ENCODE measurements at regions of chr14 and their contacts with region 1.

Region 1: DNA sequence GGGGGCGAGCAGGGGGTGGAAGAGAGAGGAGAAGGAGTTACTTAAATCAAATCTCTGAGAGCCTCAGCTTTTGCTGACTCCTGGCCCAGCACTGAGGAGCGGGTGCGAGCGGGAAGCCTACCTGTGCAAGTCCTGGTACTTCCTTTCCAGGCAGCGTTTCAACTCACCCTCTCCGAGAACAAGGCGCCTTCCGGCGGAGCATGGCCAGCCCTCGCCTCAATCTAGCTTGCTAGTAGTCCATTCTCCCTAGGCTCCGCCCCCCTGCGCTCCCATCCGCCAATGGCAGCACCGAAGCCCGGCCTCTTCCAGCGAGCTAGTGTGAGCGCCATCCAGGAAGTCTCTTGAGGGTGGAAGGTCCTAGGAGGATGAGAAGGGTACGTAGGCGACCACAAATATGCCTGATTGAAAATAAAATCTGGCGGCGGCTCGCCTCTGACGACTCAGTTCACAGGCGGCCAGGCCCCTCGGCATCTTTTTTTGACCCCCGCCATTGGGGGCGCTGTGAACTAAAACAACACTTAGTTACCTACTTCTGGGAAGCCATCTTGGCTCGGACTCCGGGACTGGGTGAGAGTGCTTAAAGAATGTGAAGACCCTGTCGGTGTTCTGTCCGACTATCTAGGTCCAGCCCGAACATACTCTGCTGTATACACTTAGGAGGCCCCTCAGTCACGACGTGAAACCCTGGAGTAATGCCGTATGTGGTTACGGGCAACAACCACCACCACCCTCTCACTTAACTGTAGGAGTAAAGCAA is at the start of gene CHD8:
- DNase-seq: peak; percentile 96 to 100
- ATAC-seq: peak; percentile 95 to 100 (median 96)
- H3K4me3 ChIP-seq: peak within 1 kb of the TSS; percentile 86
- H3K4me3 Mint-ChIP-seq: peak within 1 kb of the TSS; percentile 97
- H3K27ac ChIP-seq: peak within 1 kb of the TSS; percentile 96
- H3K27ac Mint-ChIP-seq: peak within 1 kb of the TSS; percentile 98
- H3K4me1 ChIP-seq: peaks cover 18% of the 10 kb centered on the region
- H3K4me1 Mint-ChIP-seq: peaks cover 36 to 45% of the 10 kb centered on the region in 2 donors
- H3K27me3 ChIP-seq: no peaks in the 10 kb centered on the region
- H3K27me3 Mint-ChIP-seq: no peaks in the 10 kb centered on the region
- CTCF ChIP-seq: peak; percentile 61
- total RNA-seq, gene CHD8: 150 to 167 (median 162) TPM

Region 2: DNA sequence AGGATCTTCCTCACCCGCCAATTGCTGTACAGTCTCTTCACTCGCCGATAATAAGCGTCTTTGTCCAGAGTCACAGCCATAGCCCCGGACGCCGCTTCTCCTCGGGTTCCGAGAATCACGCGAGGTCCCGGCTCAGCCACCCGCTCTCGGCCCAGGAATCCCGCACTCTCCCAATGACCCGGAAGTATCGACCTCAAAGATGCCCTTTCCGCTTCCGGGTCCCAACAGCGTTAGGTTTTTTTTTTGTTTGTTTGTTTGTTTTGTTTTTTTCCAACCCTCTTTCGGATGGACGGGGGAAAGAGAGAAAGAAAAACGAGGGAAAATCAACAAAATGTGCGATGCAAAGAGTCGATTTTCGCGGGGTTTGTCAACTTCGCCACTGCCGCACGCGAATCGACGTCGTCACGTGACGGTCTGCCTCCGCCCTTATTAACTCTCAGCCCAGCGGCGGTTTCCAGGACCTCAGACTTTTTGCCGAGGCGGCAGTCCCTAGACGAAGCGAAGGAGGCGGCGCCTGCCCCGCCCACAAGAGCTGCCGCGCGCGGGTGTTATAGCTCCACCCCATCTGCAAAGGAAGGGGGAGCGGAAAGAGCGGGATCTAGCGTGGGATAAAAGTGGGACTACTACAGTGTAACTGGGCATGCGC is 72.1 kb before region 1 on chr14 and contains the start of gene SUPT16H:
- intact Hi-C with region 1: loop called (anchors 1 kb)
- DNase-seq: peak; percentile 89 to 96
- ATAC-seq: peak; percentile 89 to 98 (median 93)
- H3K4me3 ChIP-seq: peak within 1 kb of the TSS; percentile 96
- H3K4me3 Mint-ChIP-seq: peak within 1 kb of the TSS; percentile 98
- H3K27ac ChIP-seq: peak within 1 kb of the TSS; percentile 93
- H3K27ac Mint-ChIP-seq: peak within 1 kb of the TSS; percentile 96 to 99
- H3K4me1 ChIP-seq: peaks cover 17% of the 10 kb centered on the region
- H3K4me1 Mint-ChIP-seq: peaks cover 33% of the 10 kb centered on the region in 2 donors
- H3K27me3 ChIP-seq: no peaks in the 10 kb centered on the region
- H3K27me3 Mint-ChIP-seq: no peaks in the 10 kb centered on the region
- CTCF ChIP-seq: no peak
- total RNA-seq, gene SUPT16H: 60.3 to 72.6 (median 65.1) TPM

Region 3: GRCh38 chr14:21414137-21414631 is 41.9 kb before region 1 on chr14:
- intact Hi-C with region 1: no loop called
- DNase-seq: no peak
- ATAC-seq: no peak
- H3K4me3 ChIP-seq: no peak overlapping the region
- H3K4me3 Mint-ChIP-seq: no peak overlapping the region
- H3K27ac ChIP-seq: no peak overlapping the region
- H3K27ac Mint-ChIP-seq: no peak overlapping the region
- H3K4me1 ChIP-seq: no peaks in the 10 kb centered on the region
- H3K4me1 Mint-ChIP-seq: no peaks in the 10 kb centered on the region
- H3K27me3 ChIP-seq: no peaks in the 10 kb centered on the region
- H3K27me3 Mint-ChIP-seq: no peaks in the 10 kb centered on the region
- CTCF ChIP-seq: no peak

Region 4: DNA sequence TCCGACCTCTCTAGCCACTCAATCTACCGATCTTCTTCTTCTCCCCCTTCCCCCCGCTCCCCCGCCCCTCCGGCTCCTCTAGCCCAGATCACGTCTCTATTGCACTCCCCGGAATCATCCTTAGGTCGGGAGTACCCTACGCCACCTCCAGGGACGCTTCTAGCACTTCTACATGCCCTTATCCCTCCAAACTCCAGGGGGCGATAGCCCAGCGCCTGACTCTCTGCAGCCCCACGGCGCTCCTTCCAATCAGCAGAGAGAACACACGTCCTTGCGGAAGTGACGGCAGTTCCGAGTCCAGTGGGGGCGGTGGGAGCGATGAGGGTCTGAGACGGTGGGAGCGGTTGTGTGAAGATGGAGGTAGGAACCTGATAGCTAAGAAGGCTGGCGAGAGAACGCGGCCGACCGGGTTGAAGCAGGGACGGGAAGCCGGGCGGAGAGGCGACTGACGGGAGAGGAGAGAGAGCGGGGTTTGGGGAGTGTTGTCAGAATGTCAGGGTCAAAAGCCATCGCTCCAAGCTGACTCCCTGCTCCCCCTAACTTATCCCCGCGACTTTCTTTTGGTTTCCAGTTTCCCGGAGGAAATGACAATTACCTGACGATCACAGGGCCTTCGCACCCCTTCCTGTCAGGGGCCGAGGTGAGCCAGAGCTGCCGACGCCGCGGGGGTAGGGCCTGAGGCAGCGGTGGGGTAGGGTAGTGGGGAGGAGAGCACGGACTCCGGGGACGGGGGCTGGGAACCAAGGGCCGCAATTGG is 21.0 kb after region 1 on chr14 and contains the starts of genes RAB2B and TOX4:
- intact Hi-C with region 1: loop called (anchors 1 kb)
- DNase-seq: peak; percentile 92 to 99
- ATAC-seq: peak; percentile 94 to 100 (median 96)
- H3K4me3 ChIP-seq: peak within 1 kb of the TSS; percentile 80
- H3K4me3 Mint-ChIP-seq: peak within 1 kb of the TSS; percentile 98
- H3K27ac ChIP-seq: peak within 1 kb of the TSS; percentile 88
- H3K27ac Mint-ChIP-seq: peak within 1 kb of the TSS; percentile 96 to 97
- H3K4me1 ChIP-seq: peaks cover 9% of the 10 kb centered on the region
- H3K4me1 Mint-ChIP-seq: peaks cover 34 to 43% of the 10 kb centered on the region in 2 donors
- H3K27me3 ChIP-seq: no peaks in the 10 kb centered on the region
- H3K27me3 Mint-ChIP-seq: no peaks in the 10 kb centered on the region
- CTCF ChIP-seq: peak; percentile 88
- total RNA-seq, gene RAB2B: 43.3 to 64.7 (median 50.9) TPM
- total RNA-seq, gene TOX4: 103 to 123 (median 123) TPM

Region 5: DNA sequence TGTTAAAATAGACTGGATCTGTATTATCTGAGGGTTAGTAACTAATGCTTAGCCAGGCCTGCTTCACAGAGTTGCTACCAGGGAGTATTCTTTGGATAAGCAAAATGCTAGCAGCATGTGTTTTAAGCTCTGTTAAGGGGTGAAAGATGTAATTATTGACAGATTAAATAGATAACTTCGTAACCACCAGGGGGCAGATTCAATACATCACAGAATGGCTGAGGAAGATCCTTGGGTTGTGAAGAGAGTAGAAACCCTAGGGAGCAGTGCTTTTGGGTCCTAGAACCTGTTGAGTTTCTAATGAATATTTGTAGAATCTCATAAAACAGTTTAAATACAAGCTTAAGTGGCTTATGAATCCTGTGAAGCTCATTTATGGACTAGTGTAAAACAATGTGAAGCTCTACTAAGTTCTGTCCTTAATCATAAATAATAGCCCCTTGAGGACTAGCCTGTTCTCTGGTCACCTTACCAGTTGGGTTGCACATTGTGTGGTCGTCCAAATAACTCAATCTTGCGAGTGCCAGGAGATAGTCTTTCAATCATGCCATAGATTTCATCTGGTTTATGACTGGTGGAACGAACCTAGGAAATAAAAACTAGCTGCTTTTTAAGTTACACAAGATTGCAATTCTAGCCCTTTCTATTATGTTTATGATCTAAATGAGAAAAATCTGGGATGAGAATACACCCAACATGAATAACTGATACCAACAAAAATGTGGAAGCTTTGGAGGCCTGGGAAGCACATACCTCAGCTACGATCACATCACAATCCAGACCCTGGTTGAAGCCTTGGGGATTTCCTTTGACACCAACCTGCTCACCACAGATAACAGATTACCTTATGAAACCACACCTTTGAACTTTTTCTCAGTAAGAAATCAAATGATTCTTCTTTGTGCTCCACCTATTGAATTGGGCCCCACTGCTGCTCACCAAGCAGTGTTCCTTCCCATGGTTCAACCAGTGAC is 42.8 kb after region 1 on chr14:
- intact Hi-C with region 1: no loop called
- DNase-seq: peak in 1 of 2 donors; percentile 82
- ATAC-seq: peak in 2 of 3 donors; percentile 63 to 75
- H3K4me3 ChIP-seq: no peak overlapping the region
- H3K4me3 Mint-ChIP-seq: no peak overlapping the region
- H3K27ac ChIP-seq: no peak overlapping the region
- H3K27ac Mint-ChIP-seq: peak overlapping the region; percentile 4 to 57
- H3K4me1 ChIP-seq: no peaks in the 10 kb centered on the region
- H3K4me1 Mint-ChIP-seq: peaks cover 5 to 6% of the 10 kb centered on the region in 2 donors
- H3K27me3 ChIP-seq: no peaks in the 10 kb centered on the region
- H3K27me3 Mint-ChIP-seq: no peaks in the 10 kb centered on the region
- CTCF ChIP-seq: peak; percentile 61

Region 6: GRCh38 chr14:21510735-21511657 is 54.9 kb after region 1 on chr14 and contains the start of gene METTL3:
- intact Hi-C with region 1: loop called (anchors 1 kb)
- DNase-seq: peak; percentile 91 to 98
- ATAC-seq: peak; percentile 98 to 100 (median 99)
- H3K4me3 ChIP-seq: peak within 1 kb of the TSS; percentile 82
- H3K4me3 Mint-ChIP-seq: peak within 1 kb of the TSS; percentile 97
- H3K27ac ChIP-seq: peak within 1 kb of the TSS; percentile 73
- H3K27ac Mint-ChIP-seq: peak within 1 kb of the TSS; percentile 96 to 98
- H3K4me1 ChIP-seq: peaks cover 17% of the 10 kb centered on the region
- H3K4me1 Mint-ChIP-seq: peaks cover 35 to 40% of the 10 kb centered on the region in 2 donors
- H3K27me3 ChIP-seq: no peaks in the 10 kb centered on the region
- H3K27me3 Mint-ChIP-seq: no peaks in the 10 kb centered on the region
- CTCF ChIP-seq: no peak
- total RNA-seq, gene METTL3: 63.3 to 72.5 (median 68.3) TPM